PC-3 (cell line): ENCODE measurements at regions of chr3 and their contacts with region 1.

Region 1: GRCh38 chr3:149771652-149772271 is 19.5 kb upstream of the COMMD2 start:
- DNase-seq: peak; percentile 75
- ATAC-seq: peak; percentile 83
- H3K4me3 ChIP-seq: no peak overlapping the region
- H3K27ac ChIP-seq: no peak overlapping the region
- H3K4me1 ChIP-seq: no peaks in the 10 kb centered on the region
- H3K27me3 ChIP-seq: no peaks in the 10 kb centered on the region
- CTCF ChIP-seq: peak; percentile 88

Region 2: DNA sequence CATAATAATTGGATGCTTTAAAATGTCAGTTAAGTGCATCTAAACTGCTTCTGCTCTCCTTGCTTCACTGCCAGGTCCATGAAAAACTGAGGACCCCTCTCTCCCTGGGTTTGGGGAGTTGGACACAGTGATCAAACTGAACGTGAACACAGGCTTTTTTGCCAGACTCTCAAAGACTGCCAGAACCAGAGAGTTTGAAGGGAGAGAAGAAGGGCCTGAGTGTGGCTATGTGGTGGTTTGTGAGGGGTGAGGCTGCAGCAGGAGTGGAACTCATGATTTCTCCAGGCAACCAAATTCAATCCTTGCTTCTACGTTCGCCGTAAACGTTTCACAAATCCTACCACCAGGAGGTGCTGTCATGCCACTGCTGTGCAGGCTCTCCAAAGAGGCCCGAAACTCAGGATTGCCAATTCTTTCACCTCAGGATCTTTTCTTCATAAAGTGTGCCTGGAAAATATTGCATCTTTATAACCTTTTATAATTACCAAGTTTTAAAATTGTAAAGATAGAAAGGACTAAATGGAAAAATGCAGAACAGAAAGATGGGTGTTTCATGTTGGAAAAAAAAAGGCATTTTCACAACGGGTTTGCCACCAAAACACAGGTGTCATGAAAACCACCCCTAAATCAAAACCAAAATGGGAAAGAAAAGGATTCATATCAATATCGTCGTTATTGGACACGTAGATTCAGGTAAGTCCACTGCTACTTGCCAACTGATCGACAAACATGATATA is 277.6 kb before region 1 on chr3:
- CTCF ChIA-PET with region 1: interaction called, 3 read pairs
- POLR2A ChIA-PET with region 1: no interaction called
- intact Hi-C with region 1: loop called (anchors 1 kb)
- DNase-seq: peak; percentile 81
- ATAC-seq: peak; percentile 71
- H3K4me3 ChIP-seq: no peak overlapping the region
- H3K27ac ChIP-seq: no peak overlapping the region
- H3K4me1 ChIP-seq: peaks cover 9% of the 10 kb centered on the region
- H3K27me3 ChIP-seq: no peaks in the 10 kb centered on the region
- CTCF ChIP-seq: peak; percentile 87

Region 3: GRCh38 chr3:149726716-149727407 is 44.9 kb before region 1 on chr3:
- CTCF ChIA-PET with region 1: no interaction called
- POLR2A ChIA-PET with region 1: no interaction called
- intact Hi-C with region 1: no loop called
- DNase-seq: peak; percentile 19
- ATAC-seq: no peak
- H3K4me3 ChIP-seq: no peak overlapping the region
- H3K27ac ChIP-seq: no peak overlapping the region
- H3K4me1 ChIP-seq: no peaks in the 10 kb centered on the region
- H3K27me3 ChIP-seq: no peaks in the 10 kb centered on the region
- CTCF ChIP-seq: no peak

Region 4: DNA sequence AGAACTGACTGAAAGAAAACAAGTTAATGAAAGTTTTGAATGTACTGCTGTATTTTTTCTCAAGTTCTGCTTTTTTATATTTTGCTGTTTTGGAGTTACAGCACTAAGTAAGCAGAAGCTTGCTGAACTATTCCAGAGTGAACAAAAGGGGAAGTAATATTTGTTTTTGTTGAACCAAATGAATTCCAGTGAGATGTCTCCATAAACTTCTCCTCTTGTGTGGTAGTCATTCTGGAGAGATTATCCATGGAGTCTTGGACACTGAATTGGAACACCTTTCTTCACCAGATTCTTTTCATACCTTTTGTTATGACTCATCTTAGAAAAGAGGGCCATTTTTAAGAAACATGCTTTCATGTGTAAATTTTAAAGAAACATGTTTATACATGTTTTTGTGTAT is 11.8 kb after region 1 on chr3:
- CTCF ChIA-PET with region 1: interaction called, 13 read pairs
- POLR2A ChIA-PET with region 1: no interaction called
- intact Hi-C with region 1: no loop called
- DNase-seq: peak; percentile 61
- ATAC-seq: peak; percentile 83
- H3K4me3 ChIP-seq: no peak overlapping the region
- H3K27ac ChIP-seq: no peak overlapping the region
- H3K4me1 ChIP-seq: peaks cover 14% of the 10 kb centered on the region
- H3K27me3 ChIP-seq: no peaks in the 10 kb centered on the region
- CTCF ChIP-seq: no peak